Tibial artery (tissue), 4 donors: ENCODE measurements at regions of chr1 and their contacts with region 1.

Region 1: DNA sequence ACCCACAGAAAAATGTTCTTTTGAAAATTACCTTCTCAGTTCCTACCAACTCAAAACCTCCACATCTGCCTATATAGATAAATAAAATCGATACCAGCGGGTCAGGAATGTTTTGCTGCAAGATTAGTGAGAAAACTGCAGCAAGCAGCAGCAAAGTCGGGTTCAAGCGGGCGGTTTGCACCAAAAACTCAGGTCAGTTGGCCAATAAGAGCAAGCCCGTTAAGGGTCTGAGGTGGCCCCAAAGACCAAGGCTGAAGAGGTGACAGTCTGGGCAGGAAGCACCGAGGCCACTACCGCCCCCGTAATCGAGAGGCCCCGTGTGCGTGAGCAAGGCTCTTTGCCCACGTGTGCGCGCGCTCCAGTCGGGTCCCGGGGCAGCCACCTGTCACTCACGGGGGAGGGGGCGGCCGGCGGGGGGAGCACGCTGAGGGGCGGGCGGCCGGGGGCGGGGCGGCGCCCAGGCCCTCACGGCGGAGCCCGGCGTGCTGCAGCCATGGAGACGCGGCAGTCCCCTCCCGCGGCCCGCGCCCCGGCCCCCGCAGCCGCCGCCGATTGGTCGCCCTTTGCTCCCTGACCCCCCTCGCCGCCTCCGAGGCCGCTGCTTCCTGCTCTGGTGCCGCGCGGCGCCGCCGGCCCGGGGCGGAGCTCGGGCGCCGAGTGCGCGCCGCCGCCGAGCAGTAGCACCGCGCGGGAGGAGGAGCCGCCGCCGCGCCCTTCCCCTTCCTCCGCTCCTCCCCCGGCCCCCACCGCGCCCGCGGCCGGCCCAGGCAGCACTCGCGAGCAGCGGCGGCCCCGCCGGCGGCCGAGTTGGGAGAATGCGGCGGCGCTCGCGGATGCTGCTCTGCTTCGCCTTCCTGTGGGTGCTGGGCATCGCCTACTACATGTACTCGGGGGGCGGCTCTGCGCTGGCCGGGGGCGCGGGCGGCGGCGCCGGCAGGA is at the start of gene GALNT2:
- DNase-seq: peak; percentile 83 to 93
- H3K4me3 ChIP-seq: peak within 1 kb of the TSS; percentile 79
- H3K27ac ChIP-seq: peak within 1 kb of the TSS; percentile 87 to 97
- H3K4me1 ChIP-seq: peaks cover 0 to 42% (median 24%) of the 10 kb centered on the region in 4 donors
- H3K27me3 ChIP-seq: no peaks in the 10 kb centered on the region
- CTCF ChIP-seq: no peak

Region 2: DNA sequence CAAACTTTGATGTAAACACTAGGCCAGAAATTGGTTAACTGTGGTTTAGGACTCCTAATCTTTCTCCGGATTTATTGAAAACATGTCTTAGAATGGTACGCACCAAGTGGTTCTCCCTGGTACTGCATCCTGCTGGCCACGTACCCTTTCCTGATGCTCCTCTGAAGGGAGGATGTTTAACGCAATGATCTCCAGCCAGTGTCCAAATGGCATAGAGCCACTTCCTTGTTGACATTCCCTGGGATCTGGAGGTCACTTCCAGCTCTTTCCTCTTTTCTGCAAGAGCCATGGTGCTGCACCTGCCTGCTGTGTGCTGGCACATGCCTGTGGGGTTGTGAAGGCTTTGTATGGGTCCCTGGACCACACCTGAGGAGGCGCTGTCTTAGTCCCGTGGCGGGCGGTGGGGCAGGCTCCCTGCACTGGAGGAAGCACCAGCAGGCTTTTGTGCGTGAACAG is 54.2 kb after region 1 on chr1:
- intact Hi-C with region 1: loop called (anchors 10 kb)
- DNase-seq: no peak
- H3K4me3 ChIP-seq: no peak overlapping the region
- H3K27ac ChIP-seq: no peak overlapping the region
- H3K4me1 ChIP-seq: peaks cover 0 to 21% (median 6%) of the 10 kb centered on the region in 4 donors
- H3K27me3 ChIP-seq: no peaks in the 10 kb centered on the region
- CTCF ChIP-seq: peak; percentile 35 to 44

Region 3: DNA sequence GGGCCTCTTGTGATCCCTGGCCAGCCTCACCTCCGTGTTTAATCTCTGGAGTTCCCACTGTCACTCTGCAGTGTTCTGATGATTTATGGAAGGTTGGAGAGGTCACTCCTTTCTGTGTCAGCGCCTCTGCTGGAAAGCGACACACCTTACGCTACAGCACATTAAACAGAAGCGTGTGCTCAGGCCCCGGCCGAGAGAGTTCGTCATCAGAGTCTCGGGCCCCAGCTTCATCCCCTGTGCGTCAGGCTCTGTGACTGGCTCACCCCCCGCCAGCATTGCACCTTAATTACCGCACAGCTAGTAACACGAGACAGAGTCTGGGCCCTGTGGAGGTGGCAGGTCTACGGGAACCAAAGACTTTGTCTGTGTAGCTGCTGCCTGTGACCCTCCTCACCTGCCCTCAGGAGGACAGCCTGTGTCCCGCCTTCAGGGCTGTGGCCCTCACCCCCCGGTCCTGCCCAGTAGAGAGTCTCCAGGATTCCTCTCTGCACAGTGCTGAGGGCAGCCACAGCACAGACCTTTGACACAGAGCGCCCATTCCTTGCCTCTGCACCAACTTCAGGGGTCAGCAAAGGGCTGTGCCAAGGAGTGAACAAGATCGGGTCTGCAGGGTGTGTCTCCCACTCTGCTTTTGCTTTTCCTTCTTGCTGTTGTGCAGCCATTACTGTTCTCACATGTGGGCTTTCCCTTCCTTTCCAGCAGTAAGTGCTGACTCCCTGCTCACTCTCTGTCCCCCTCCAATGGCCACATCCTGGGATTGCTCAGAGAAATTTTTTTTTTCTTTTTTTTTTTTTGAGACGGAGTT is 201.8 kb after region 1 on chr1:
- intact Hi-C with region 1: loop called (anchors 5 kb)
- DNase-seq: peak in 1 of 2 donors; percentile 64
- H3K4me3 ChIP-seq: no peak overlapping the region
- H3K27ac ChIP-seq: peak overlapping the region; percentile 10 to 71
- H3K4me1 ChIP-seq: peaks cover 0 to 57% (median 18%) of the 10 kb centered on the region in 4 donors
- H3K27me3 ChIP-seq: no peaks in the 10 kb centered on the region
- CTCF ChIP-seq: peak; percentile 47 to 51

Region 4: DNA sequence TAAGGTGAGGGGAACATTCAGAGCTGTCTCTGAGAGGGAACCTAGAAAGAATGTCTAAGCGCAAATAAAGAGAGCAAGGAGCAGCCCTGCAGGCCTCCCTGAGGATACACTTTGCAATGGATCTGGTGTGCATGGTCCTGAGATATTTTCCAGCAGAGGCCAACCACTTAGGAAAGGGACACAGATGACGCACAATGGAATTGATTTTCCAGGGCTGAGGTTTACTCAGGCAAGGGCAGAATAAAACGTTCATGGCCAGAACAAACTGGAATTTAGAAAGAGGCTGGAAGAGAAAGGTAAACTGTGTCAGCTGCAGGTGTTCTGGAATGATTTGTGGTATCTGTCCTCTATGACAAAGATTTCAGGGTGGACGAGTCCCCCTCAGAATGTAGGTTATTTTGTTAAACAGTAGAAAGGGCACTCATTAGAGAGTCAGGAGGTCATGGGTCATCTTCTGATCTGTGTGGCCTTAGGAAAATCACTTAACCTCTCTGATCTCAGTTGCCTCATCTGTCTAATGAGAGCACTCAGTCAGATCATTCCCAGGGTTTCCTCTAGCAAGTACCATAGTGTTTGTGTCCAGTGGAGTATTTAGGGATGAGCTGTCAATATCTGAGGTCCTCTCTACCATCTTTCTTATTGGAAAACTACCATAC is 421.2 kb after region 1 on chr1:
- intact Hi-C with region 1: no loop called
- DNase-seq: no peak
- H3K4me3 ChIP-seq: no peak overlapping the region
- H3K27ac ChIP-seq: no peak overlapping the region
- H3K4me1 ChIP-seq: no peaks in the 10 kb centered on the region
- H3K27me3 ChIP-seq: no peaks in the 10 kb centered on the region
- CTCF ChIP-seq: no peak